CD8-positive, alpha-beta T cell (primary cell): ENCODE measurements at regions of chr17 and their contacts with region 1.

Region 1: DNA sequence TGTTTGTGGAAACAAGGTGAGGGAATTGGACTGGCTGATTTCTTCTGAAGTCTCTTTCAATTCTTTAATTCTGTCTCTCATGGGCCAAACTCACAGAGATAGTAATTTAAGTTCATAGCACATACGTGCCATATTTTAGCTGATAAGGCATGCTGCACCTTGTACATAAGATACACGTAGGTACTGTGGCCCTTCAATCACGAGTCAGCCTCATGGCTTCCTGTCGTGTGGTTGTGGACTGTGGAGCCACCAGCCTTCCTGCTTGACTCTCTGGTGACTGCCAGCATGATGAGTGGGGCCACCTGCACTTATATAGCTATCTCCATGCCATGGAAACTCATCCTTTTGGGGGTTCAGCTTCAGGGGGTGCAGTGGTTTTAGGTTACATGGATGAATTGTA is 25.1 kb downstream of the KSR1 start:
- DNase-seq: peak; percentile 19 to 76 (median 56)
- ATAC-seq: peak; percentile 99
- H3K4me3 ChIP-seq: no peak overlapping the region
- H3K4me3 Mint-ChIP-seq: no peak overlapping the region
- H3K27ac ChIP-seq: no peak overlapping the region
- H3K27ac Mint-ChIP-seq: peak overlapping the region; percentile 76
- H3K4me1 ChIP-seq: peaks cover 12% of the 10 kb centered on the region
- H3K4me1 Mint-ChIP-seq: peaks cover 46% of the 10 kb centered on the region
- H3K27me3 ChIP-seq: no peaks in the 10 kb centered on the region
- H3K27me3 Mint-ChIP-seq: no peaks in the 10 kb centered on the region
- CTCF ChIP-seq: no peak

Region 2: DNA sequence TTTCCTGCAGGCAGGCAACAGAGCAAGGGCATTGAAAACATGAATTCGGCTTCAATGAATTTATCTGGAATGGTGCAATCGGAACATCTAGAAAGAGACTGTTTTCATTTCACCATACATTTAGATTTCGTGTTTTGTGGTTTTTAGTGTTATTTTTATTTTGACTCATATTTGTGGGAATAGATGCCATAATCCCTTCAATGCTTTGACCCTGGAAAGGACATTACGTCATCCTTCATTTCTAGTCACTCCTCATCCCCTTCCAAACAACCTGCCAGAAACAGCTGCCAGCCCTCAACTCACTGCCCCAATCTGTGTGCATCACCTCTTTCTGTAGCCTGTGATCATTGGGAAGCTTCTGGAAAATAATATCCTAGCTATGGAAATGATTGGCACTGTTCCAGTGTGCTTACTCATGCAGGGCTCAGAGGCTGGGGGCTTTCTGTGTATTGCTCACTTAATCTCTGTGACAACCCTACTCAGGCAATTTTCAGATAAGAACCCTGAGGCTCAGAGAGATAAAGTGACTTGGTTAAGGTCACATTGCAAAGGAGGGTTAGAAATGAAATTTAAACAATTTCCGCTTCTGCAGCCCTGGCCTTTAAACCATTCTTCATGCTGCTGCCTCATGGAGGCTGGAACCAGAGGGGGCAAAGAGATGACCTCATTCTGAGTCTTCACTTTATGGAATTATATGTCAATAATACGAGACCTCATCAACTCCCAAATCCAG is 34.6 kb before region 1 on chr17:
- CTCF ChIA-PET with region 1: no interaction called
- POLR2A ChIA-PET with region 1: no interaction called
- intact Hi-C with region 1: loop called in 1 of 2 experiments (anchors 5 kb)
- DNase-seq: no peak
- ATAC-seq: no peak
- H3K4me3 ChIP-seq: no peak overlapping the region
- H3K4me3 Mint-ChIP-seq: no peak overlapping the region
- H3K27ac ChIP-seq: no peak overlapping the region
- H3K27ac Mint-ChIP-seq: no peak overlapping the region
- H3K4me1 ChIP-seq: no peaks in the 10 kb centered on the region
- H3K4me1 Mint-ChIP-seq: no peaks in the 10 kb centered on the region
- H3K27me3 ChIP-seq: no peaks in the 10 kb centered on the region
- H3K27me3 Mint-ChIP-seq: peaks cover 8% of the 10 kb centered on the region
- CTCF ChIP-seq: no peak

Region 3: DNA sequence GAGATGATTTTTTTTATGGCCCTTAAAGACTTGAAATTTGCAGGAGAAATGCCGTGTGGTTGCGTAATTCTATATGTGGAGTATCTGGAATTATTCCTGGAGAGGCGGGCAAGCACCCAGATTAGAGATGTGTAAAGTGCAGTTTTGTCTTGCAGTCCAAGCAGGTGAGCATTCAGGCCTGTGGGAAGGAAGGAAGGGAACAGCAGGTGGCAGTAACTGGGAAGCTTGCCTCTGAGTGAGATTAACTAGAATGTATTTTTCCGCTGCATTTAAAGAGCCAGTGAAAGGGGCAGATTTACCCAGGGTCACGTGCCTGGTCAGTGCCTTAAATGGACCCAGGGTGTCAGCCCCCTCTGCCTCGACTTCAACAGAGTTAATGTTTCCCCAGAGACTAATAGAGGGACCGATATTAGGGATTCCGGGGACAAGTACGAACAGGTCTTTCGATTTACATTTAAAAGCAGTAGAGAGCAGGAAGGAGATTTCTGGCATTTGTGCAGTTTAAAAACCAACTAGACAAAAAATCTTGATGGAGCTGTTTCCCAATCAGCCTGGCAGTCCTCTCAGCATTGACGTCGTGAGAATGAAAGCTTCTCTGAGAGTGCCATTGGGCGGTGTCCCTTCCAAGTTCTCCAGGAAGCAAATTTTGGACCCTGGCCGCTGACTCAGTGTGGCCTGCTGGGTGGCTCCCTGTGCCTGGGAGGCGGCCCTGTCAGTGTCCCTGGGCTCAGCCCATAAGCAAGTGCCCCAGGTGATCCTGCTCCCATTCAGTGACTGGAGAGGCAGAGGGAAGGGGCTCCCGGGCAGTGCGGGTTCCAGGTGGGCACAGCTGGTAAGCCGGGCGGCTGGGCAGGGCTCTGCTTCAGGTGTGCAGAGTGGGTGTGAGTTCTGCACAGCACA is 13.1 kb after region 1 on chr17:
- CTCF ChIA-PET with region 1: no interaction called
- POLR2A ChIA-PET with region 1: no interaction called
- intact Hi-C with region 1: no loop called
- DNase-seq: no peak
- ATAC-seq: no peak
- H3K4me3 ChIP-seq: no peak overlapping the region
- H3K4me3 Mint-ChIP-seq: no peak overlapping the region
- H3K27ac ChIP-seq: no peak overlapping the region
- H3K27ac Mint-ChIP-seq: no peak overlapping the region
- H3K4me1 ChIP-seq: no peaks in the 10 kb centered on the region
- H3K4me1 Mint-ChIP-seq: no peaks in the 10 kb centered on the region
- H3K27me3 ChIP-seq: no peaks in the 10 kb centered on the region
- H3K27me3 Mint-ChIP-seq: no peaks in the 10 kb centered on the region
- CTCF ChIP-seq: no peak

Region 4: GRCh38 chr17:27609611-27610303 is 128.4 kb after region 1 on chr17:
- CTCF ChIA-PET with region 1: no interaction called
- POLR2A ChIA-PET with region 1: no interaction called
- intact Hi-C with region 1: no loop called
- DNase-seq: peak in 1 of 9 experiments; percentile 30
- ATAC-seq: no peak
- H3K4me3 ChIP-seq: no peak overlapping the region
- H3K4me3 Mint-ChIP-seq: no peak overlapping the region
- H3K27ac ChIP-seq: no peak overlapping the region
- H3K27ac Mint-ChIP-seq: no peak overlapping the region
- H3K4me1 ChIP-seq: no peaks in the 10 kb centered on the region
- H3K4me1 Mint-ChIP-seq: no peaks in the 10 kb centered on the region
- H3K27me3 ChIP-seq: no peaks in the 10 kb centered on the region
- H3K27me3 Mint-ChIP-seq: no peaks in the 10 kb centered on the region
- CTCF ChIP-seq: no peak